IMR-90 (cell line): ENCODE measurements at regions of chr18 and their contacts with region 1.

Region 1: DNA sequence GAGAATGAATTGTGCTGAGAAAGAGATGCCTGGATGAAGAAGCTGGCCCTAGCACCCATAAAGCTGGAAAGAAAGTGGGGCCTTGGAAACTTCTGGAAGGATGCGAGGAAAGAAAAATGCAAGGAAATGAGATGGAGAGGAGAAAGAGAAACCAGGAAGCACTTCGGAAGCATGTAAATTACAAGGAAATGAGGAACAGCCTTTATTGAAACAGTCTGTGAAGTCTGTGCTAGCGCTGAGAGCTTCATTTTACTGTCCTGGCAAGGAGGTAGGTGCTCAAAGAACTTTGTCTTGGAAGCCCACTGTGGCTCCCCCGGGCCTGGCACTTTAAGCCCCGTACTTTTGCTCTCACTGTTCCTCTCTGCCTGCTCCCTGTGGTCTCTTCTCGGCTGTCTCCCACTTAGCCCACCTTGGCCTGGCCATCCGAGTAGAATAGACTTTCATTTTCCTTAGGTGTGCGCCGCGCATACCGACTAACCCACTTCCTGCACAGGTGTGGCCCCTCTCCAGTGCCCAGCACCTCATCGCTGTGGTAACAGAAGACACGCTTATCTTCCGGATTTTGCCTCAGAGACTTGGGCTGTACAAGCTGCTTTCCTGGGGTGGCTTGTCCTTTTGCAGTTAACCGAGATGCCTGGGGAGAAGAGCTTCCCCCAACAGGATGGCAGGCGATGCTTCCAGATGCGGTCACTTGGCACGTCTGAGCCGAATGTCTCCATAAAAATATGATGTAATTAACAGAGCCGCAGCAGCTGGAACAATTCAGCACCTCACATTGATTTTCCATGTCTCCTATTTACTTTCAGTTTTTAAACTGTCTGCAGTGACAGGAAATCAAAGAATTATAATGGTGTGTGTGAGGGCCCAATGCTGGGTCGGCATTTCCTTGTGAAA is 199.6 kb downstream of the HRH4 start:
- DNase-seq: peak; percentile 18
- ATAC-seq: 0 out of 2 replicates have a peak, but pooled peaks have one; percentile 12
- H3K4me3 ChIP-seq: no peak overlapping the region
- H3K27ac ChIP-seq: peak overlapping the region; percentile 35; the same call in 1 of the 2 replicates
- H3K4me1 ChIP-seq: peaks cover 26% of the 10 kb centered on the region
- H3K27me3 ChIP-seq: peaks cover 3% of the 10 kb centered on the region
- CTCF ChIP-seq: no peak
- POLR2A ChIP-seq: no peak
- RAD21 ChIP-seq: no peak

Region 2: GRCh38 chr18:23735021-23735464 is 925.0 kb before region 1 on chr18:
- CTCF ChIA-PET with region 1: no interaction called
- POLR2A ChIA-PET with region 1: no interaction called
- dilution Hi-C with region 1: no loop called
- in situ Hi-C with region 1: no loop called
- intact Hi-C with region 1: no loop called
- DNase-seq: no peak
- ATAC-seq: peak; percentile 37; the same call in 1 of the 2 replicates
- H3K4me3 ChIP-seq: no peak overlapping the region
- H3K27ac ChIP-seq: no peak overlapping the region
- H3K4me1 ChIP-seq: no peaks in the 10 kb centered on the region
- H3K27me3 ChIP-seq: peaks cover 46% of the 10 kb centered on the region
- CTCF ChIP-seq: no peak
- POLR2A ChIP-seq: no peak
- RAD21 ChIP-seq: no peak

Region 3: DNA sequence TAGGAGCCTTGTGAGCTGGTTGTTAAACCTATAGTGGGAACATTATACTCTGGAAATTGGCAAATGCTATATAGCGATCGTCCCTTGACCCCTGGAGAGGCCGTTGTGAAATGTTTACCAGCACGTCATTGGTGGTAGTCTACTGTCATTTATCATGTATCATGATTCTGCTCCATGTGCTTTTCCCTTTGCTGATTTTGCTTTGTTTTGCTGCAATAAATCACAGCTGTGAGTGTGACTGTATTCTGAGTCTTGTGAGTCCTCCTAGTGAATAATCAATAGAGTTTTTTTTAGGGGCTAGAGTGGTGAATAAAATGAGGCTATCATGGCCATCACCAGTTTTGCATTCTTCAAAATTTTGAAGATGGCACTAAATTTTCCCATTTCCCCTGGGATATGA is 10.5 kb before region 1 on chr18:
- CTCF ChIA-PET with region 1: no interaction called
- POLR2A ChIA-PET with region 1: no interaction called
- dilution Hi-C with region 1: no loop called
- in situ Hi-C with region 1: no loop called
- intact Hi-C with region 1: loop called (anchors 2 kb)
- DNase-seq: no peak
- ATAC-seq: no peak
- H3K4me3 ChIP-seq: no peak overlapping the region
- H3K27ac ChIP-seq: no peak overlapping the region
- H3K4me1 ChIP-seq: no peaks in the 10 kb centered on the region
- H3K27me3 ChIP-seq: no peaks in the 10 kb centered on the region
- CTCF ChIP-seq: no peak
- POLR2A ChIP-seq: no peak
- RAD21 ChIP-seq: no peak